Dorsolateral prefrontal cortex (tissue), 120 donors: ENCODE measurements at regions of chr1 and their contacts with region 1.

Region 1: GRCh38 chr1:27725374-27726173 is at the start of gene FAM76A:
- DNase-seq: peak; percentile 99 to 100 (median 99)
- H3K4me3 ChIP-seq: peak within 1 kb of the TSS; percentile 64 to 98 (median 91)
- H3K27ac ChIP-seq: peak within 1 kb of the TSS; percentile 61 to 97 (median 93)
- H3K27me3 ChIP-seq: no peaks in the 10 kb centered on the region
- CTCF ChIP-seq: peak in 55 of 56 donors; percentile 27 to 89 (median 65)
- total RNA-seq, gene FAM76A: 8.3 to 24.0 (median 15.8) TPM

Region 2: GRCh38 chr1:27830621-27831424 is 105.2 kb after region 1 on chr1 and contains the start of gene PPP1R8:
- intact Hi-C with region 1: loop called in 1 of 2 experiments (anchors 1 kb)
- DNase-seq: peak; percentile 87 to 96 (median 94)
- H3K4me3 ChIP-seq: peak within 1 kb of the TSS; percentile 68 to 100 (median 94)
- H3K27ac ChIP-seq: peak within 1 kb of the TSS; percentile 60 to 98 (median 94)
- H3K27me3 ChIP-seq: no peaks in the 10 kb centered on the region
- CTCF ChIP-seq: peak in 43 of 56 donors; percentile 5 to 67 (median 35)
- total RNA-seq, gene PPP1R8: 26.5 to 47.0 (median 34.4) TPM

Region 3: GRCh38 chr1:27858072-27858958 is 132.7 kb after region 1 on chr1:
- intact Hi-C with region 1: no loop called
- DNase-seq: peak; percentile 53 to 93 (median 89)
- H3K4me3 ChIP-seq: peak overlapping the region in 15 of 59 donors; percentile 1 to 47 (median 27)
- H3K27ac ChIP-seq: peak overlapping the region in 11 of 59 donors; percentile 9 to 59 (median 41)
- H3K27me3 ChIP-seq: no peaks in the 10 kb centered on the region
- CTCF ChIP-seq: peak; percentile 76 to 98 (median 94)